Esophagus muscularis mucosa (tissue), 4 donors: ENCODE measurements at regions of chr9 and their contacts with region 1.

Region 1: GRCh38 chr9:34546834-34547827 is 24.3 kb upstream of the ENHO start:
- DNase-seq: no peak
- H3K4me3 ChIP-seq: no peak overlapping the region
- H3K27ac ChIP-seq: no peak overlapping the region
- H3K4me1 ChIP-seq: peaks cover 0 to 17% (median 4%) of the 10 kb centered on the region in 4 donors
- H3K27me3 ChIP-seq: peaks cover 0 to 30% (median 0%) of the 10 kb centered on the region in 4 donors
- CTCF ChIP-seq: peak; percentile 53 to 70 (median 65)
- EP300 ChIP-seq: no peak
- POLR2A ChIP-seq: no peak

Region 2: GRCh38 chr9:34403554-34404380 is 143.4 kb before region 1 on chr9:
- intact Hi-C with region 1: loop called (anchors 5 kb)
- DNase-seq: no peak
- H3K4me3 ChIP-seq: no peak overlapping the region
- H3K27ac ChIP-seq: no peak overlapping the region
- H3K4me1 ChIP-seq: peaks cover 0 to 8% (median 3%) of the 10 kb centered on the region in 4 donors
- H3K27me3 ChIP-seq: no peaks in the 10 kb centered on the region
- CTCF ChIP-seq: peak; percentile 92 to 97 (median 96)
- EP300 ChIP-seq: no peak
- POLR2A ChIP-seq: no peak

Region 3: GRCh38 chr9:34493972-34494535 is 53.1 kb before region 1 on chr9:
- intact Hi-C with region 1: no loop called
- DNase-seq: no peak
- H3K4me3 ChIP-seq: no peak overlapping the region
- H3K27ac ChIP-seq: no peak overlapping the region
- H3K4me1 ChIP-seq: no peaks in the 10 kb centered on the region
- H3K27me3 ChIP-seq: peaks cover 0 to 12% (median 0%) of the 10 kb centered on the region in 4 donors
- CTCF ChIP-seq: no peak
- EP300 ChIP-seq: no peak
- POLR2A ChIP-seq: no peak

Region 4: GRCh38 chr9:34701769-34702736 is 154.9 kb after region 1 on chr9:
- intact Hi-C with region 1: no loop called
- DNase-seq: peak; percentile 93
- H3K4me3 ChIP-seq: peak overlapping the region; percentile 72 to 92 (median 76)
- H3K27ac ChIP-seq: peak overlapping the region; percentile 80 to 90 (median 86)
- H3K4me1 ChIP-seq: peaks cover 4 to 20% (median 11%) of the 10 kb centered on the region in 4 donors
- H3K27me3 ChIP-seq: no peaks in the 10 kb centered on the region
- CTCF ChIP-seq: peak; percentile 97 to 99 (median 98)
- EP300 ChIP-seq: no peak
- POLR2A ChIP-seq: no peak